WTC11 (cell line): ENCODE measurements at regions of chr12 and their contacts with region 1.

Region 1: GRCh38 chr12:108234158-108234557 is 105.0 kb downstream of the CMKLR1 start:
- DNase-seq: no peak
- ATAC-seq: no peak
- H3K4me3 Mint-ChIP-seq: no peak overlapping the region
- H3K27ac Mint-ChIP-seq: no peak overlapping the region
- H3K4me1 Mint-ChIP-seq: peaks cover 32% of the 10 kb centered on the region
- H3K27me3 Mint-ChIP-seq: no peaks in the 10 kb centered on the region; the same call in 1 of the 2 replicates
- CTCF ChIP-seq: no peak

Region 2: GRCh38 chr12:108063192-108063591 is 171.0 kb before region 1 on chr12:
- CTCF ChIA-PET with region 1: interaction called, 15 read pairs
- POLR2A ChIA-PET with region 1: no interaction called
- DNase-seq: no peak
- ATAC-seq: peak; percentile 53
- H3K4me3 Mint-ChIP-seq: no peak overlapping the region
- H3K27ac Mint-ChIP-seq: no peak overlapping the region
- H3K4me1 Mint-ChIP-seq: no peaks in the 10 kb centered on the region
- H3K27me3 Mint-ChIP-seq: no peaks in the 10 kb centered on the region
- CTCF ChIP-seq: peak; percentile 84

Region 3: GRCh38 chr12:108129017-108129812 is 104.9 kb before region 1 on chr12 and contains the start of gene WSCD2:
- CTCF ChIA-PET with region 1: interaction called, 26 read pairs
- POLR2A ChIA-PET with region 1: no interaction called
- DNase-seq: peak; percentile 90
- ATAC-seq: peak; percentile 90
- H3K4me3 Mint-ChIP-seq: peak within 1 kb of the TSS; percentile 69
- H3K27ac Mint-ChIP-seq: no peak within 1 kb of the TSS
- H3K4me1 Mint-ChIP-seq: peaks cover 25% of the 10 kb centered on the region
- H3K27me3 Mint-ChIP-seq: peaks cover 28% of the 10 kb centered on the region
- CTCF ChIP-seq: no peak
- total RNA-seq, gene WSCD2: 1.1 to 1.6 TPM (median 1.6 TPM) in 3 replicates

Region 4: GRCh38 chr12:108162207-108162606 is 72.0 kb before region 1 on chr12:
- CTCF ChIA-PET with region 1: no interaction called
- POLR2A ChIA-PET with region 1: no interaction called
- DNase-seq: no peak
- ATAC-seq: no peak
- H3K4me3 Mint-ChIP-seq: no peak overlapping the region
- H3K27ac Mint-ChIP-seq: no peak overlapping the region
- H3K4me1 Mint-ChIP-seq: peaks cover 4% of the 10 kb centered on the region; the same call in 1 of the 2 replicates
- H3K27me3 Mint-ChIP-seq: no peaks in the 10 kb centered on the region
- CTCF ChIP-seq: no peak

Region 5: DNA sequence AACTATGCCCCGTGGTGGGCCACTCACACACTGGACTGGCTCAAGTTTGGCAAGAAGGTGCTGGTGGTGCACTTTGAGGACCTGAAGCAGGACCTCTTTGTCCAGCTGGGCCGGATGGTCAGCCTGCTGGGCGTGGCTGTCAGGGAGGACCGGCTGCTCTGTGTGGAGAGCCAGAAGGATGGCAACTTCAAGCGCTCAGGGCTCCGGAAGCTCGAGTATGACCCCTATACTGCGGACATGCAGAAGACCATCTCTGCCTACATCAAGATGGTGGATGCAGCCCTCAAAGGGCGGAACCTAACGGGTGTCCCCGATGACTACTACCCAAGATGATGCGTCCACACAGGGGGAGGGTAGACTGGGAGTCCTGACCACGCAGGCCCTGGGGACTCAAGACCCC is 13.9 kb after region 1 on chr12:
- CTCF ChIA-PET with region 1: interaction called, 10 read pairs
- POLR2A ChIA-PET with region 1: no interaction called
- DNase-seq: no peak
- ATAC-seq: no peak
- H3K4me3 Mint-ChIP-seq: no peak overlapping the region
- H3K27ac Mint-ChIP-seq: no peak overlapping the region
- H3K4me1 Mint-ChIP-seq: peaks cover 15% of the 10 kb centered on the region
- H3K27me3 Mint-ChIP-seq: no peaks in the 10 kb centered on the region; the same call in 1 of the 2 replicates
- CTCF ChIP-seq: no peak

Region 6: DNA sequence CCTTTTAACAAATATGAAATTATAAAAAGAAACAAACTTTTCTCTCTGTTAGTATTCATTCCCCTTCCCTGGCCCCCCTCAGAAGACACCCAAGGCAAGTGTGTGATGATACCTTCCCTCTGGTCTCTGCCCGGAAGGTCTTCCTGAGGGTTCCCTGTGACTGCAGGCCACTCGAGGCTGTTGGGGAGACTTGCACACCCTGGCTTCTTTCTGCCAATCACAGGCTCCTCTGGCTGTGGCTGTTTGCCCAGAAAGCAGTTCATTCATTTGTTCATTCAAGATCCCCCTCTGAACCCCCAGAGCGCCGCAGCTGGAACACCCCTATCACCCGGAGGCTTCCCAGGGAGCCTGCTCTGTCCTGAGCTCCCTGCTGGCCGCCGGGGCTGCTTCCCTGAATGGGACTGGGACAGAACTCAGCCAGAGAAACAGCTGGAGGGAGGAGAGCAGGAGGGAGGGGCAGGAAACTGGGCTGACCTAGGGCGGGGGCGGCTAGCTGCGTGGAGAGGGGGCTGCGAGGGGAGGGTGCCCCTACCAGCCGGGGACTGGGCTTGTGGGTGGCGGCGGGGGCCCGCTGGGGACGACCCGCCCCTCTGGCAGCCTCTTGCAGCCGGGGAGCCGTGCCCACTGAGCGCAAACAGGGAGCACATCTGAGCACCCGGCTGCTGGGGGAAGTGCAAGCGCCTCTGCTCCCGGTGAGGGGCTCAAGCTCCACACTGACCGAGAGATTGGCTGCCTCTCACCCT is 104.9 kb after region 1 on chr12 and contains the start of gene CMKLR1:
- CTCF ChIA-PET with region 1: interaction called, 11 read pairs
- POLR2A ChIA-PET with region 1: no interaction called
- DNase-seq: peak; percentile 30
- ATAC-seq: peak; percentile 65
- H3K4me3 Mint-ChIP-seq: no peak within 1 kb of the TSS
- H3K27ac Mint-ChIP-seq: no peak within 1 kb of the TSS
- H3K4me1 Mint-ChIP-seq: peaks cover 23% of the 10 kb centered on the region
- H3K27me3 Mint-ChIP-seq: no peaks in the 10 kb centered on the region; the same call in 1 of the 2 replicates
- CTCF ChIP-seq: no peak
- total RNA-seq, gene CMKLR1: 1.4 to 1.9 TPM (median 1.6 TPM) in 3 replicates

Region 7: DNA sequence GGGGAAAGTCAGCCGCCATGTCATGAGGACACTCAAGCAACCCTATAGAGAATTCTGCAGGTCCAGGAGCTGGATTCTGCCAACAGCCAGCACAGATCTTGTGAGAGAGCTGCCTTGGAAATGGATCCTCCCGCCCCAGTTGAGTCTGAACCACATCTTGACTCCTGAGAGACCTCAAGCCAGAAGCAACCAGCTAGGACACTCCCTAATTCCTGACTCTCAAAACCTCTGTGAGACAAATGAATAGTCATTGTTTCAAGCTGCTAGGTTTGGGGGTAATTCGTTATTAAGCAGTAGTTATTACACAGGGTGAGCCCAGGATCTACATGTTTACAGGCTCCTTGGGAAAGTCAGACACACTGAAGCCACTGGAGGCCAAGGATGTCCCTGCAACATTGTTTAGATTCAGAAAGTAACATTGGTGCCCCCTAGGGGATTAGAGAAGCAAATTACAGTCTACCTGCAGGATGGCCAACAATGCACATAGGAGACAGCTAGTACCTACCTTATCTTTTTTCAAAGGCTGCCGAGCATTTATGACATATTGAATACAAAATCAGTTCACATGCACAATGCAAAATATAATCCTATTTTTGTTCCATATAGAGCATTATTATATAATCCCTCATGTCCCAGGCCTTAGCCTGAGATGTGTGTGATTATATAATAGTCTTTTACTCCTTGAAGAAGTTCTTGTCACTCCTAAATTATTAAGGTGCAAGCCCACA is 223.0 kb after region 1 on chr12:
- CTCF ChIA-PET with region 1: interaction called, 17 read pairs
- POLR2A ChIA-PET with region 1: no interaction called
- DNase-seq: no peak
- ATAC-seq: peak; percentile 95
- H3K4me3 Mint-ChIP-seq: no peak overlapping the region
- H3K27ac Mint-ChIP-seq: peak overlapping the region; percentile 3
- H3K4me1 Mint-ChIP-seq: peaks cover 24% of the 10 kb centered on the region
- H3K27me3 Mint-ChIP-seq: no peaks in the 10 kb centered on the region
- CTCF ChIP-seq: peak; percentile 50; the same call in 1 of the 2 replicates

Region 8: GRCh38 chr12:108495054-108495453 is 260.9 kb after region 1 on chr12:
- CTCF ChIA-PET with region 1: interaction called, 13 read pairs
- POLR2A ChIA-PET with region 1: no interaction called
- DNase-seq: peak; percentile 67
- ATAC-seq: peak; percentile 85
- H3K4me3 Mint-ChIP-seq: no peak overlapping the region
- H3K27ac Mint-ChIP-seq: no peak overlapping the region
- H3K4me1 Mint-ChIP-seq: no peaks in the 10 kb centered on the region
- H3K27me3 Mint-ChIP-seq: no peaks in the 10 kb centered on the region; the same call in 1 of the 2 replicates
- CTCF ChIP-seq: peak; percentile 70